ENCODE measurements at regions of chr3 and their contacts with region 1.

Region 1: DNA sequence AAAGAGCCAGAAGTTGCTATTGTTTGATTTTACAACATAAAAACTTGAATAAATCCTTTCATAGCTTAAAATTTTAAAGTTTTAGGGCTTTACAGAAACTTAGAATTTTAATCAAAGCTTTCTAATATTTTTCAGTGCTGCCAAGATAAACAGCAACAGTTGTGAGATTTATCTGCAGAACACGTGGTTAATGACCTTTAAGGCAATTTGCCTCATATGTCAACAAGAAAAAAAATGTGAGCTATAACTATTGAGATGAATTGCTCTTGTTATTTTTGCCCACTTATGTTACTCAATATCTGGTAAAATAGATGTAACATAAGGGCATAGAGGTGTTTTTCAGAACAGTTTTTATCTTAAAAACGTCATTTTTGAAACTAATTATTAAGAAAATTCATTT is 96.7 kb upstream of the NECTIN3 start:
- DNase-seq: no peak
- ATAC-seq: no peak
- H3K4me3 ChIP-seq: no peak overlapping the region
- H3K4me3 Mint-ChIP-seq: no peak overlapping the region
- H3K27ac ChIP-seq: no peak overlapping the region
- H3K27ac Mint-ChIP-seq: no peak overlapping the region
- H3K4me1 ChIP-seq: no peaks in the 10 kb centered on the region
- H3K4me1 Mint-ChIP-seq: peaks cover 0 to 4% (median 0%) of the 10 kb centered on the region in 7 donors
- H3K27me3 ChIP-seq: no peaks in the 10 kb centered on the region
- H3K27me3 Mint-ChIP-seq: peaks cover 10 to 16% (median 14%) of the 10 kb centered on the region in 5 donors

Region 2: GRCh38 chr3:110006913-110007312 is 968.0 kb before region 1 on chr3:
- CTCF ChIA-PET with region 1: no interaction called
- POLR2A ChIA-PET with region 1: no interaction called
- intact Hi-C with region 1: no loop called
- DNase-seq: no peak
- ATAC-seq: no peak
- H3K4me3 ChIP-seq: no peak overlapping the region
- H3K4me3 Mint-ChIP-seq: no peak overlapping the region
- H3K27ac ChIP-seq: no peak overlapping the region
- H3K27ac Mint-ChIP-seq: no peak overlapping the region
- H3K4me1 ChIP-seq: no peaks in the 10 kb centered on the region
- H3K4me1 Mint-ChIP-seq: no peaks in the 10 kb centered on the region
- H3K27me3 ChIP-seq: no peaks in the 10 kb centered on the region
- H3K27me3 Mint-ChIP-seq: peaks cover 0 to 7% (median 0%) of the 10 kb centered on the region in 5 donors

Region 3: GRCh38 chr3:110608566-110608965 is 366.3 kb before region 1 on chr3:
- CTCF ChIA-PET with region 1: no interaction called
- POLR2A ChIA-PET with region 1: no interaction called
- intact Hi-C with region 1: loop called in 1 of 2 experiments (anchors 5 kb)
- DNase-seq: no peak
- ATAC-seq: no peak
- H3K4me3 ChIP-seq: no peak overlapping the region
- H3K4me3 Mint-ChIP-seq: no peak overlapping the region
- H3K27ac ChIP-seq: no peak overlapping the region
- H3K27ac Mint-ChIP-seq: no peak overlapping the region
- H3K4me1 ChIP-seq: no peaks in the 10 kb centered on the region
- H3K4me1 Mint-ChIP-seq: no peaks in the 10 kb centered on the region
- H3K27me3 ChIP-seq: no peaks in the 10 kb centered on the region
- H3K27me3 Mint-ChIP-seq: peaks cover 0 to 21% (median 10%) of the 10 kb centered on the region in 5 donors

Measured in naive thymus-derived CD4-positive, alpha-beta T cell (primary cell).